ENCODE measurements at regions of chr2 and their contacts with region 1.

Region 1: GRCh38 chr2:25197336-25198208 is 29.2 kb upstream of the POMC start:
- DNase-seq: no peak
- H3K4me3 Mint-ChIP-seq: no peak overlapping the region
- H3K27ac Mint-ChIP-seq: no peak overlapping the region
- H3K4me1 Mint-ChIP-seq: peaks cover 6% of the 10 kb centered on the region
- H3K27me3 Mint-ChIP-seq: no peaks in the 10 kb centered on the region

Region 2: DNA sequence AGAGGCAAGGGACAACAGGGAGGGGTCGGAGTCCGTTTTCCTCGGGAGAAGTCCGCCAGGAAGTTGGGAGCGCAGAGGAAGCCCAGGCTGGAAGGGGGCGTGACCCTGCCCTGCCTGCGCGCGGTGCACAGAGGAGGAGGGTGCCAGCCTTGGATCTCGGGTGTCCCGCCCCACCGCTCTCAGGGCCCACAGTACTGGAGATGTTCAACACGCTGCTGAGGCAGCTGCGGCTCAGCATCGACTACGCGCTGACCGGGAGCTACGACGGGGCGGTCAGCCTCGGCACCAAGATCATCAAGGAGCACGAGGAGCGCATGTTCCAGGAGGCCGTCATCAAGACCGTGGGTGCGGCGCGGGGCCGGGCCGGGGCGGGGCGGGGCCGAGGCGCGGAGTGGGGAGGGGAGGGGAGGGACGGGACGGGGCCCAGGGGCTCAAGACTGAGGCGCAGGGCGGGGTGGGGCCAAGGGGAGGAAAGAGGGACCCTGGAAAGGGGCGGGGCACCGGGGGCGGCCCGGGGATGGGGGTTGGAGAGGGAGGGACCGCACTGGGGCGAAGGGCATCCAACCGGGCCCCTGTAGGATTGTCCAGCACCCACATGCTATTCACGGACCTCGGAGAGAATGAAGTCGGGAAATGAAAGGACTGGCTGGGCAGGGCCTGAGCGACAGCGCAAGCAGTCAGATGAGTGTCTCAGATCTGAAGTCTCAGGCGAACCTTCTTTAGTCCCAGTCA is 65.8 kb before region 1 on chr2:
- CTCF ChIA-PET with region 1: interaction called, 6 read pairs
- intact Hi-C with region 1: loop called (anchors 2 kb)
- DNase-seq: peak; percentile 11
- H3K4me3 Mint-ChIP-seq: peak overlapping the region; percentile 60
- H3K27ac Mint-ChIP-seq: peak overlapping the region; percentile 39
- H3K4me1 Mint-ChIP-seq: peaks cover 10% of the 10 kb centered on the region
- H3K27me3 Mint-ChIP-seq: peaks cover 48% of the 10 kb centered on the region

Region 3: DNA sequence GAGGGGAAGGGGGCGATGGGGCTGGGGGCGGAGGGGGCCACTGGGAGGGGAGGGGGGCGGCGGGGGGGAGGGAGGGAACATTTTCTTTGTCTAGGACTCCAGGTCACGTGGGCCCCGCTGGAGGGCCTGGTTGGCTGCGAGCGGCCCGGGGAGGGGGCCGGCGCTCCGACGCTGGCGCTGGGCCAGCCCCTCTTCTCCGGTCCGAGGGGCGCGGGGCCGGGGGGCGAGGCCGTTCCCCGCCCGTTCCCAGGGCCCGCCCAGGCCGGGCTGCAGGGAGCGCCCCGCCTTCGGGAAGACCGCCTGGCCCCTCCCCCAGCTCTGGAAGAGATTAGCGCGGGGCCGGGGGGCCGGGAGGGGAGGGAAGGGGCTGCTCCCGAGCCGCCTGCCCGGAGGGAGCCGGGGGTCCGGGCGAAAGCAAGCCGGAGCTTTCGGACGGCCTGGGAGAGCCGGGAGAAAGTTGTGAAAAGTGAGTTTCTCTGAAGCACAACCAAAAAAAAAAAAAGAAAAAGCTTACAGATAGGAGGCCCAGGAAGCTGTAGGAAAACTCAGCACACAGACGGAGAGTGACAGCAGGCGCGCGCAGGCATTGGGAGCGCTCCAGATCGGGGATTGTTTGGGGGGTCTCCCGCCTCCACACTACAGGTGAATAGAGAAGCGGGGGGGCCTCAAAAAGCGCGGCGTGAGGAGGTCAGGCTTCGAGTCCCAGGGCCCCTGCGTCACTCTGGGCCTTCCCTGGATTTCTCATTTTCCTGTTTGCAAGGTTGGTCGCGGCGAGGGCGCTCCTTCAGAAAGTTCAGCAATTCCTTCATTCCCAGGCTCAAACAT is 54.9 kb after region 1 on chr2:
- CTCF ChIA-PET with region 1: no interaction called
- intact Hi-C with region 1: no loop called
- DNase-seq: peak; percentile 60
- H3K4me3 Mint-ChIP-seq: peak overlapping the region; percentile 81
- H3K27ac Mint-ChIP-seq: peak overlapping the region; percentile 53
- H3K4me1 Mint-ChIP-seq: peaks cover 18% of the 10 kb centered on the region
- H3K27me3 Mint-ChIP-seq: no peaks in the 10 kb centered on the region